A673 (cell line): ENCODE measurements at regions of chr1 and their contacts with region 1.

Region 1: GRCh38 chr1:54927472-54928240 is 40.7 kb upstream of the DHCR24 start:
- DNase-seq: peak; percentile 82
- H3K4me3 ChIP-seq: no peak overlapping the region
- H3K27ac ChIP-seq: peak overlapping the region; percentile 50
- H3K4me1 ChIP-seq: peaks cover 16% of the 10 kb centered on the region
- H3K27me3 ChIP-seq: no peaks in the 10 kb centered on the region
- CTCF ChIP-seq: no peak

Region 2: DNA sequence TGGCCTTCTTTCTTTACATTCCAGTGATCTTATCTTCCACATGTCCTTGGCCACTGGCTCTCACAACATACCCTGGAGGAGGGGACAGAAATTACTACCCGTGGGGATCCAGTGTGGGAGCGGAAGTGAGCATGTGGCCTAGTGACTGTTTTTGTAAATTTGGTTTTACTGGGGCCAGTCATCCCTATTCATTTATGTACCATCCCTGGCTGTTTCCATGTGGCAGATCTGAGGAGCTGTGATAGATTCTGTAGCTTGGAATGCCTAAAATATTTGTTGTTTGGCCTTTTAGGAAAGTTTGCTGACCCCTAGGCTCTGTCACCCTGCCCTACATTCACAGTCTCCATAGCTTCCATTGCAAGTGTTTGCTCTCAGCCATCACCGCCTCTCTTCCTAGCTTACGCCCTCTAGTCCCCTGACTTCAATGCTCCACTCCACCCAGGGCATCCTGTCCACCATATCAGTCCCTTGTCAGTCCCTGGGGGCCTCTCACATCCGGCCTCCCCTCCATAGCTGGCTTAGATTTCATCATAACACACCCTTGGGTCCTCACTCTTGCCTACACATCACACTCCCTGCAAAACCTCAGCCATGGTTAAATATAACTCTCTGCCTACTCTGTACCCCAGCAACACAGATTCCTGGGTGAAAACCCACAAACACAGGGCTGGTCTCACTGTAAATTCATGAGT is 66.4 kb before region 1 on chr1:
- CTCF ChIA-PET with region 1: no interaction called
- POLR2A ChIA-PET with region 1: interaction called, 15 read pairs
- intact Hi-C with region 1: no loop called
- DNase-seq: no peak
- H3K4me3 ChIP-seq: no peak overlapping the region
- H3K27ac ChIP-seq: no peak overlapping the region
- H3K4me1 ChIP-seq: no peaks in the 10 kb centered on the region
- H3K27me3 ChIP-seq: no peaks in the 10 kb centered on the region
- CTCF ChIP-seq: no peak